ENCODE measurements at regions of chr7 and their contacts with region 1.

Region 1: GRCh38 chr7:56074371-56074791 is 10.3 kb downstream of the SUMF2 start:
- DNase-seq: peak; percentile 49 to 95
- H3K4me3 ChIP-seq: no peak overlapping the region
- H3K27ac ChIP-seq: peak overlapping the region; percentile 49 to 67
- H3K4me1 ChIP-seq: peaks cover 3 to 10% of the 10 kb centered on the region in 2 donors
- H3K27me3 ChIP-seq: no peaks in the 10 kb centered on the region
- CTCF ChIP-seq: peak; percentile 84 to 92 (median 85)

Region 2: GRCh38 chr7:55641273-55641691 is 433.1 kb before region 1 on chr7:
- intact Hi-C with region 1: loop called (anchors 1 kb)
- DNase-seq: no peak
- H3K4me3 ChIP-seq: no peak overlapping the region
- H3K27ac ChIP-seq: no peak overlapping the region
- H3K4me1 ChIP-seq: no peaks in the 10 kb centered on the region
- H3K27me3 ChIP-seq: no peaks in the 10 kb centered on the region
- CTCF ChIP-seq: peak; percentile 44 to 67 (median 59)

Region 3: DNA sequence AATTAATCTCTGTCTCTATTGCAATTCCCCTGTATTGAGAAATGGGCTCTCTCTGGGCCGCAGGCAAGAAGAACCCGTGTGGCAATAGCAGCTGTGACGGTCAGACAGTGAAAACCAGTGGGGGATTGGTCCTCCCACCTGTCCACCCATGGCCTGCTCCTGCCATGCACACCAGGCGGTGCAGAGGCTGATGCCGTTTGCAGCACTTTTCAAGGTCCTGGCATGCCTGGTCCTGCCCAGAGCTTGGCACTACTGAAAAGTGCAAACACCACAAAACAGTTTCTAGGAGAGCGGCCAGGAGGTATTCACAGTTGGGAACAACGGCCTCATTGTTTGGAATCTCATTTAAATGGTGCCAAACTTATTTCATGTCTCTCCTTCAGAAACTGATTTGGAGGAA is 64.7 kb before region 1 on chr7:
- intact Hi-C with region 1: loop called (anchors 1 kb)
- DNase-seq: no peak
- H3K4me3 ChIP-seq: no peak overlapping the region
- H3K27ac ChIP-seq: no peak overlapping the region
- H3K4me1 ChIP-seq: peaks cover 0 to 2% of the 10 kb centered on the region in 2 donors
- H3K27me3 ChIP-seq: no peaks in the 10 kb centered on the region
- CTCF ChIP-seq: no peak